G401 (cell line): ENCODE measurements at regions of chr14 and their contacts with region 1.

Region 1: GRCh38 chr14:20118795-20119194 is 8.3 kb downstream of the OR4K17 start:
- DNase-seq: no peak

Region 2: GRCh38 chr14:20059745-20060144 is 59.0 kb before region 1 on chr14 and contains the start of gene OR4L1:
- in situ Hi-C with region 1: loop called (anchors 10 kb)
- DNase-seq: no peak
- total RNA-seq, gene OR4L1: not detected in 2 replicates

Region 3: DNA sequence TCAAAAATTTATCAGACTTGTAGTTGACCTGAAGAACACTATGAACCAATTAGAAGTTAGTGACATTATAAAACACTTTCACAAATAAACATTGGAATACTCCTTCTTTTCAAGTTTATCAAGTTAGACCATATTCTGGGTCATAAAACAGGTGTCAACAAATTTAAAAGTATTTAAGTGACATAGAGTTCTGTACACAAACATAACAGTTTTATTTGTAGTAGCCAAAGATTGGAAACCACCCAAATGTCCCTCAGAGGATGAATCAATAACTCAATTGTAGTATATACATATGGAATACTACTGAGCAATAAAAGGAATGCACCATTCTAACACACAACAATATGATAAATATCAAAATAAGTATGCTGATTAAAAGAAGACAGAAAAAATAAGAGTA is 48.3 kb after region 1 on chr14:
- in situ Hi-C with region 1: no loop called
- DNase-seq: no peak

Region 4: DNA sequence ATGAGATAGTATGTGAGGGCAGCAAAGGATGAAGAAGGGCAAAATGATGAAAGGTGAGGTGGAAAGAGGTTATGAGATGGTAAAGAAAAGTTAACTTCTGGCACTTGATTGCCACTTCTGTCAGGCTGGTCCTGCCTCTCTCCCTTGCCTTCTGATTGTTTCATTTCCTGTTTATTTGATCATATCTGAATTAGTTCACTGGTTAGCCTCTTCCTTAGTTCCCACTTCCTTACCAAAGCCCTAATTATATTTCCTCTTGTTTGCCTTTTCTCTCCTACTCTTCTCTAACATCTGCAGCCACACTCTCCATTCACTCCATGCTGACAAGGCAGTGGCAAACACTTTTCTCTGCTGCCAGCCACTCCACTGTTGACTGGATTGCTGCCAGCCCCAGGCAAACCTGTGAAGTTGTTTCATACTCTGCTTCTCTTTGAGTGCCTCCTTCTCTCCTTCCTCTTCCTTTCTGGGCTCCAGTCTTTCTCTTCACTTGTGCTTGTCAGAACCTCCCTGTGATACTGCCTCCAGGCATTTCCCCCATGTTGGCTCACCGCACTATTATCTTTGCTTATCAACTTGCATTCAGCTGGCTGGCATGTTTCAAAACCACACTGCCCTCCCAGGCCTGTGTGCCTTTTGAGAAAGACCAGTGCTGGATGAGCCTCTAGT is 358.5 kb after region 1 on chr14:
- in situ Hi-C with region 1: no loop called
- DNase-seq: no peak